Activated CD8-positive, alpha-beta T cell treated with anti-CD3 and anti-CD28 coated beads for 36 hours (primary cell): ENCODE measurements at regions of chr19 and their contacts with region 1.

Region 1: GRCh38 chr19:48290771-48291488 is 21.0 kb downstream of the ZNF114 start:
- DNase-seq: peak; percentile 55
- ATAC-seq: peak; percentile 60
- H3K4me3 Mint-ChIP-seq: peak overlapping the region; percentile 74
- H3K27ac Mint-ChIP-seq: no peak overlapping the region
- H3K4me1 Mint-ChIP-seq: peaks cover 8% of the 10 kb centered on the region
- H3K27me3 Mint-ChIP-seq: no peaks in the 10 kb centered on the region
- CTCF ChIP-seq: peak; percentile 99

Region 2: DNA sequence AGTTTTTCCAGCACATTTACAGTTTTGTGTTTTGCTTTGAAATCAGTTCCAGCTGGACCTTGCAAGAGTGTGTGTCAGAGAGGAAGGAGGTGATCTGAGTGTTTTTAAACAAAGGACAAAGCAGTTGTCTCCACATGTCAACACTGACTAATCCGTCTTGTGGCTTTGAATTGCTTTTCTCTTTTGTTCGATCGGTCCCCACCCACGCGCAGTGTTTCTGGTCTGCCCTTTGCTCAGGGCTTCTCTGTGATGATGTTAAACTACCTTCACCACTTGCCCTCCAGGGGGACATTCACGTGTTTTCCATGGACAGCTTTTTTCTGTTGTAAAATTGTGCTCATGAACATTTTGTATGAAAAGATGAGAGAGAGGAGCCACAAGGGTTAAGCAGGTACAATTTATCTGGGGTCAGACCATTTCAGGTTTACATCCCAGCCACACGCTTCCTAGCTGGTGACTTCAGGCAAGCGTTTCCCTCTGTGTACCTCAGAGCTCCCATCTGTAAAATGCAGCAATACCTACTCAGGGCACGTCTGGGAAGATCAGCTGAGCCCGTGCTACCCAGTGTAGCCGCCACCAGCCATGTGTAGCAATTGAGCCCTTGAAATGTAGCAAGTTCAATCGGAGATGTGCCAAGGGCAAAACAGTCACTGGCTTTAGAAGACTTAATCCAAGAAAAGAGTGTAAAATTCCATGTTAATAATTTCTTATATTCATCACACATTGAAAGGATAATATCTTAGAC is 166.9 kb before region 1 on chr19:
- CTCF ChIA-PET with region 1: no interaction called
- POLR2A ChIA-PET with region 1: no interaction called
- intact Hi-C with region 1: no loop called
- DNase-seq: peak; percentile 90
- ATAC-seq: peak; percentile 87
- H3K4me3 Mint-ChIP-seq: no peak overlapping the region
- H3K27ac Mint-ChIP-seq: peak overlapping the region; percentile 69
- H3K4me1 Mint-ChIP-seq: peaks cover 18% of the 10 kb centered on the region
- H3K27me3 Mint-ChIP-seq: no peaks in the 10 kb centered on the region
- CTCF ChIP-seq: peak; percentile 22

Region 3: DNA sequence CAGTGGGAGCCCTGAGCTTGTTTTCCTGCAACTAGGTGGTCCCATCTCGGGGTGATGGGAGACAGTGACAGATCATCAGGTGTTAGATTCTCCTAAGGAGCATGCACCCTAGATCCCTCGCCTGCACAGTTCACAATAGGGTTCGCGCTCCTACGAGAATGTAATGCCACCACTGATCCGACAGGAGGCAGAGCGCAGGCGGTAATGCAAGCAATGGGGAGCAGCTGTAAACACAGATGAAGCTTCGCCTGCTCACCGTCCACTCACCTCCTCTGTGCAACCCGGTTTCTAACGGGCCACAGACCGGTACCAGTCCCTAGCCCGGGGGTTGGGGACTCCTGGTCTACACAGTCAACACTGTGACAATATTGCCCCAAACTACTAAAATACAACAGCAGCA is 74.0 kb before region 1 on chr19:
- CTCF ChIA-PET with region 1: no interaction called
- POLR2A ChIA-PET with region 1: no interaction called
- intact Hi-C with region 1: no loop called
- DNase-seq: no peak
- ATAC-seq: no peak
- H3K4me3 Mint-ChIP-seq: no peak overlapping the region
- H3K27ac Mint-ChIP-seq: no peak overlapping the region
- H3K4me1 Mint-ChIP-seq: peaks cover 7% of the 10 kb centered on the region
- H3K27me3 Mint-ChIP-seq: no peaks in the 10 kb centered on the region
- CTCF ChIP-seq: no peak

Region 4: DNA sequence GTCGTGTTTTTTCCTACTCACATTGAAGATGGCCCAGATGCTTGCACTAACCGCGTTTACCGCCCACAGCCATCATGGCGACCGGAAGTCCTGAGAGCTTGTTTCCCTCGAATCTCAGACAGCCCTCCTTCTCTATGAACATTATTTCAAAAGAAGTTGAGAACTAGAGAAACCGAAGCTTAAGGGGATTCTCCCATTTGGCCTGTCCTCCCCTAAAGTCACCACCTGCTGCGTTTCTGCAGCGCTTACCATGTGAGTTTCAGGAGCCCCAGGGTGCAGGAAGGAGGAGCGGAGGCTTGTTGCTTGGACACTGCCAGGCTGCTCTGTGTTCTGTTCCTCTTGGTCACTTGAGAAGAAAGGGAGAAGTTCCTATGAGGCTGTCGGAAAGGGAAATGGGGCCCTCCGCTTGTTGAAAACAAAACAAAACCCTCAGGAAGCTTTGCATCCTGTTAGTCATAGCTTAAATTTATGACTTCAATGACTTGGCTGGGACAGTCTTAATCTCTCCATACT is 41.4 kb before region 1 on chr19:
- CTCF ChIA-PET with region 1: no interaction called
- POLR2A ChIA-PET with region 1: no interaction called
- intact Hi-C with region 1: no loop called
- DNase-seq: peak; percentile 95
- ATAC-seq: peak; percentile 82
- H3K4me3 Mint-ChIP-seq: peak overlapping the region; percentile 85
- H3K27ac Mint-ChIP-seq: peak overlapping the region; percentile 99
- H3K4me1 Mint-ChIP-seq: peaks cover 65% of the 10 kb centered on the region
- H3K27me3 Mint-ChIP-seq: no peaks in the 10 kb centered on the region
- CTCF ChIP-seq: no peak

Region 5: DNA sequence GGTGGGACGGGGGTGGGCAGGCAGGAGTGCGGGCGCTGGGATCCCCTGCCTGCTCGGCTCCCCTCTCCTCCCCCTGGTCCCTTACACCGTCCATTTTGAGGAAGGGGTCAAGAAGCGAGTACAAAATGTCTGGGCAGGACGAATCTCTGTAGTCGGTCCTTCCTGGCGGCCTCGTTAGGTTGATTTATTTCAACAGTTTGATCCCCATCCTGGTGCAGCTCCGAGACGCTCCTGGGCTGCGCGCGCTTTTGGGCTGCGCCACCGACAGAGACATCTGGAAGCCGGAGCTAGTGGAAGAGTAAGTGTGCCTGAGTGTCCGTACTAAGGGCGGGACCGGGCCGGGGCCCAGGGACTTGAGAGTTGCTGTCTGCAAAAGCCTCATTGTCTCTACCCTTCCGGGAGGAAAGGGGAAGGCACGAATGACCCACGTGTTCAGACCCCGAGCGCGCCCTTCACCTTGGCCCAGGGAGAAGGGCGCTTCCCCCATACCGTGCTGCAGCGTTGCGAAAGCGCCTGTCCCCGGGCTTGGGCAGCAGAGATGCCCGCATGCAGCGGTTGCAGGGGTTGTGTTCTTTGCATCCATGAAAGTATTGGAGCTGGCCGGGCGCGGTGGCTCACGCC is 19.3 kb before region 1 on chr19:
- CTCF ChIA-PET with region 1: interaction called, 73 read pairs
- POLR2A ChIA-PET with region 1: no interaction called
- intact Hi-C with region 1: no loop called
- DNase-seq: peak; percentile 35
- ATAC-seq: peak; percentile 60
- H3K4me3 Mint-ChIP-seq: peak overlapping the region; percentile 74
- H3K27ac Mint-ChIP-seq: no peak overlapping the region
- H3K4me1 Mint-ChIP-seq: peaks cover 12% of the 10 kb centered on the region
- H3K27me3 Mint-ChIP-seq: peaks cover 11% of the 10 kb centered on the region
- CTCF ChIP-seq: no peak